ENCODE measurements at regions of chr10 and their contacts with region 1.

Region 1: GRCh38 chr10:93376372-93377293 is 105.5 kb downstream of the MYOF start:
- DNase-seq: peak; percentile 76 to 90
- ATAC-seq: peak; percentile 80 to 90
- H3K4me3 ChIP-seq: peak overlapping the region; percentile 19; the same call in 2 of the 3 replicates
- H3K27ac ChIP-seq: peak overlapping the region; percentile 87
- H3K4me1 ChIP-seq: peaks cover 42% of the 10 kb centered on the region
- CTCF ChIP-seq: peak; percentile 98
- EP300 ChIP-seq: no peak
- POLR2A ChIP-seq: no peak
- RAD21 ChIP-seq: peak; percentile 98

Region 2: DNA sequence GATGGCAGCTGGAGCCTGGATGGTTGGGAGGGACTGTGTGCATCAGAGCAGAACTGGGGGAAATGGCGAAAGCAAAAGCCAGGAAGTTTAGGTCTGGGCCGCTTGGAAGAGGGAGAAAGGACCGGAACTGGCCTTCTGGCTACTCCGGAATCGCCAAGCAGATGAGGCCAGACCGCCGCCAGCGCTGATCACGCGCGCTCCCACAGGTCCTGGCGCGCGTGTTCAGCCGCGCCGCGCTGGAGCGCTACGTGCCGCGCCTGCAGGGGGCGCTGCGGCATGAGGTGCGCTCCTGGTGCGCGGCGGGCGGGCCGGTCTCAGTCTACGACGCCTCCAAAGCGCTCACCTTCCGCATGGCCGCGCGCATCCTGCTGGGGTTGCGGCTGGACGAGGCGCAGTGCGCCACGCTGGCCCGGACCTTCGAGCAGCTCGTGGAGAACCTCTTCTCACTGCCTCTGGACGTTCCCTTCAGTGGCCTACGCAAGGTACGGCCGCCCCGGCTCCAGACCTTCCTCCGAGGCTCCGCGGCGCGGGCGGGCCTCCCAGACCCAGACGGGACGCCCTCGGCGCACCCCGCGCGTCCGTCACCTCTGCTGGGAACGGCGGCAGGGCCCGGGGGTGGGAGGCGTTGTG is 314.0 kb before region 1 on chr10:
- CTCF ChIA-PET with region 1: no interaction called
- POLR2A ChIA-PET with region 1: no interaction called
- DNase-seq: peak in 1 of 2 experiments; percentile 38
- ATAC-seq: peak; percentile 40 to 84; a peak in 4 of 6 replicates
- H3K4me3 ChIP-seq: no peak overlapping the region
- H3K27ac ChIP-seq: no peak overlapping the region
- H3K4me1 ChIP-seq: no peaks in the 10 kb centered on the region
- CTCF ChIP-seq: peak; percentile 44
- EP300 ChIP-seq: no peak
- POLR2A ChIP-seq: no peak
- RAD21 ChIP-seq: no peak

Region 3: GRCh38 chr10:93280699-93281366 is 95.8 kb before region 1 on chr10:
- CTCF ChIA-PET with region 1: no interaction called
- POLR2A ChIA-PET with region 1: no interaction called
- DNase-seq: no peak
- ATAC-seq: no peak
- H3K4me3 ChIP-seq: no peak overlapping the region
- H3K27ac ChIP-seq: no peak overlapping the region
- H3K4me1 ChIP-seq: no peaks in the 10 kb centered on the region
- CTCF ChIP-seq: no peak
- EP300 ChIP-seq: no peak
- POLR2A ChIP-seq: no peak
- RAD21 ChIP-seq: no peak

Region 4: GRCh38 chr10:93386631-93387369 is 10.2 kb after region 1 on chr10:
- CTCF ChIA-PET with region 1: interaction called, 103 read pairs
- POLR2A ChIA-PET with region 1: no interaction called
- DNase-seq: no peak
- ATAC-seq: no peak; a peak in 2 of 6 replicates
- H3K4me3 ChIP-seq: no peak overlapping the region
- H3K27ac ChIP-seq: peak overlapping the region in 1 of 2 experiments; percentile 40; a peak in 1 of 6 replicates
- H3K4me1 ChIP-seq: peaks cover 24% of the 10 kb centered on the region
- CTCF ChIP-seq: no peak
- EP300 ChIP-seq: no peak
- POLR2A ChIP-seq: no peak
- RAD21 ChIP-seq: no peak

Region 5: GRCh38 chr10:93420091-93420490 is 43.5 kb after region 1 on chr10:
- CTCF ChIA-PET with region 1: interaction called, 16 read pairs
- POLR2A ChIA-PET with region 1: no interaction called
- DNase-seq: no peak
- ATAC-seq: no peak
- H3K4me3 ChIP-seq: no peak overlapping the region
- H3K27ac ChIP-seq: no peak overlapping the region; a peak in 1 of 6 replicates
- H3K4me1 ChIP-seq: peaks cover 15% of the 10 kb centered on the region
- CTCF ChIP-seq: no peak
- EP300 ChIP-seq: no peak
- POLR2A ChIP-seq: no peak
- RAD21 ChIP-seq: no peak

Region 6: DNA sequence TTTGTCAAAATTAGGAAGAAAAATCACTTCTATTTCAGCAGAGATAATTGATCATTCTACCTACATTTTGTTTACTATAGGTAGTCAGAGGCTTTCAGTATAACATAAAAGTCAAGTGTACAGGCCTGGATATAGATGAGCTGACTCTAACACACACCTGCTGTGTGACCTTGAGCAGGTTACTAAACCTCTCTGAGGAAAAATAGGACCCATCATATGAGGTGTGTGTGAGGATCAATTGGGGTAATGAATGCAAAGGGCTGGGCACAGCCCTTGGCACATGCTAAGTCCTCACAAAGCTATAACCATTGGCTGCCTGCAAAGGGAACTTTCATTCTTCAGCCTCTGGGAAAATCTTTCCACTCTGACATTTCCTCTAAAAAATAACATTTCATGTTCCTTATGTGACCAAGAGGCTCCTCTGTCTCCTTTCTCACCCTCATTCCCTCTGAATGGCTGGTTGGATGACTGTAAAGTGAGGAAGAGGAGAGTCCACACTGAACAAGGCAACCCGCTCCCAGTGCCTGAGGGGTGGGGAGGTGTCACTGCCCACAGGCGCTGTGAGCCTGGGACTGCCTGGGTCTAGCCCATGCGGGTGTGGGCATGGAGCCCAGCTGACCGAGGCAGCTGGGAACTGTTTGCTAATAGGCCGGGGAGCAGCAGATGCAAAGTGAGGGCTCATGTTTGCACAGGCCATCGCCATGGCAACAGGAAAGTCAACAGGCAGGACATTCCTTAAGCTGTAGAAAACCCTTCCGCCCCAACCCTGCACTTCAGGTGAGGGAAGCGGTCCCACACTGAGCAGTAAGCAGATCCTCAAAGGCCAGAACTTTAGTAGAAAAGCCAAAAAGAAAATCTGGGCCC is 68.7 kb after region 1 on chr10:
- CTCF ChIA-PET with region 1: interaction called, 83 read pairs
- POLR2A ChIA-PET with region 1: no interaction called
- DNase-seq: peak; percentile 96 to 99
- ATAC-seq: peak; percentile 95 to 97
- H3K4me3 ChIP-seq: no peak overlapping the region
- H3K27ac ChIP-seq: peak overlapping the region; percentile 97 to 98
- H3K4me1 ChIP-seq: peaks cover 68% of the 10 kb centered on the region
- CTCF ChIP-seq: no peak
- EP300 ChIP-seq: peak in 1 of 2 experiments; percentile 36; a peak in 1 of 5 replicates
- POLR2A ChIP-seq: peak; percentile 36
- RAD21 ChIP-seq: peak; percentile 23 to 31; a peak in 3 of 5 replicates

Region 7: GRCh38 chr10:93503075-93503474 is 126.4 kb after region 1 on chr10:
- CTCF ChIA-PET with region 1: interaction called, 92 read pairs
- POLR2A ChIA-PET with region 1: no interaction called
- DNase-seq: no peak
- ATAC-seq: no peak
- H3K4me3 ChIP-seq: no peak overlapping the region
- H3K27ac ChIP-seq: no peak overlapping the region
- H3K4me1 ChIP-seq: peaks cover 14% of the 10 kb centered on the region; the same call in 2 of the 3 replicates
- CTCF ChIP-seq: no peak
- EP300 ChIP-seq: no peak
- POLR2A ChIP-seq: no peak
- RAD21 ChIP-seq: no peak

Region 8: DNA sequence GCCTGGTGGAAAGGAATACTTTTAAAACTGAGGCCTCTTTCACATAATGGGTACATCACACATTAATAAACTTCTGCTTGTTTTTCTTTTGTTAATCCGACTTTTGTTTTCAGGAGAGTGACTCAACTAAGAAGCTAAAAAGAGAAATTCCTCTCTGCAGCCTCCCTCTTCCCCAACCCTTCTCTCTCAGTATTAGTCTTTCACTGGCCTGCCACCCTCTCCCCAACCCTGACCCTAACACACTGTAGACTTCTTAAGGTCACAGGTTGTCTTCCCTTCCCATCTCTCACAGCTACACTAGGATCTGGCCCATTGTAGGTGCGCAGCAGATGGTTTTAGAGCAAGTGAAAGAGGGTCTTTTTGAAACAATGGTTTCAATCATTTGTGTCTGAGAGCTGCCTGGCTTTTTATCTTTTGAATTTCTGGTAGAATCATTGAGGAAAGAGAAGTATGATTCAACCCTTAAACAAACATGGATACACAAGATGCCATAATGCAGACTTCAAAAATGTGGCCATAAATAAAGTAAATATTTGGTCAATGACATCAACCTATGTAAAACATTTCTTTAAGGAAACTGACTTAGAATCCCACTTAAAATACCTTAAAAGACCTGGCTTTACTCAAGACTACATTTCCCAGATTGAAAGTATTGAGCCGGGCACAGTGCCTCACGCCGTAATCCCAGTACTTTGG is 171.9 kb after region 1 on chr10:
- CTCF ChIA-PET with region 1: no interaction called
- POLR2A ChIA-PET with region 1: no interaction called
- DNase-seq: peak; percentile 70 to 90
- ATAC-seq: peak; percentile 83 to 86
- H3K4me3 ChIP-seq: no peak overlapping the region
- H3K27ac ChIP-seq: peak overlapping the region; percentile 84 to 86
- H3K4me1 ChIP-seq: peaks cover 41% of the 10 kb centered on the region
- CTCF ChIP-seq: no peak
- EP300 ChIP-seq: peak; percentile 20 to 41; a peak in 1 of 5 replicates
- POLR2A ChIP-seq: no peak
- RAD21 ChIP-seq: no peak